ENCODE measurements at regions of chr1 and their contacts with region 1.

Region 1: DNA sequence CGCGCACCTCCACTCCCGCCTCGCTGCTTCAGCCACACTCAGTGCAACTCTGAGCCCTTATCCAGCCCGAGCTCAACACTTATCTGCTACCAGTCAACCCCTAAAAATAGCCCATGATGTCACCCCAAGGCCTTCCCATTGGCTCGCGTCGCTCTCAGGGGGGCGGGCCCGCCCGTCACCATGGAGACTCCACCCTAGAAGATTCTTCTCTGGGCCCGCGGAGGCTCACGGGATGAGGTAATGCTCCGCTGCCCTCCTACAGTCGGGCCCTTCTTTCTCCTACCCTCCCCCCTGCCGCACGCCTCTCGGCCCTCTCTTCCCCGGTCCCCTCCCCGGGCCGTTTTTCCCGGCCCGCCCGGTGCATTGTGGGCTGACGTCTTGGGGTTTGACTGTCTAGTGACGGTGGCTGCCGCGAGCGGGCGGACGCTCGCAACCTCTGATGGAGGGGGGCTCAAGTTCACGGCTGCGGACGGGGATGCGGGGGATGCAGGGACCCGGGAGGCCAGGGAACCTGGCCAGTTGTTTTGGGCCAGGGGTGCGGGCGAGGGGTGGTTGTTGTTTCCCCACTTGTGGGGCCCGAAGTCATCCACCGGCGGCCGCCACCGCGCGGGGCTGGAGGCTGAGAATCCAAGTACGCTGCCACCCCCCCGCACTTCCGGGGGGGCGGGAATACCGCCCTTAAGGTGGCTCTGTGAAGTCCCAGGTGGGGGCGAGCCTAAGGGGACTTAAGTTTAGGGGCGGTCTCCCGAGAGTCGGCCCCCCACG is at the start of gene JUN:
- DNase-seq: peak; percentile 99
- H3K4me3 ChIP-seq: peak within 1 kb of the TSS; percentile 74 to 86
- H3K27ac ChIP-seq: peak within 1 kb of the TSS; percentile 99
- H3K4me1 ChIP-seq: peaks cover 14% of the 10 kb centered on the region
- H3K27me3 ChIP-seq: no peaks in the 10 kb centered on the region
- CTCF ChIP-seq: peak in 2 of 3 experiments; percentile 34 to 60
- POLR2A ChIP-seq: peak; percentile 100
- total RNA-seq, gene JUN: 60.6 to 67.8 TPM

Region 2: DNA sequence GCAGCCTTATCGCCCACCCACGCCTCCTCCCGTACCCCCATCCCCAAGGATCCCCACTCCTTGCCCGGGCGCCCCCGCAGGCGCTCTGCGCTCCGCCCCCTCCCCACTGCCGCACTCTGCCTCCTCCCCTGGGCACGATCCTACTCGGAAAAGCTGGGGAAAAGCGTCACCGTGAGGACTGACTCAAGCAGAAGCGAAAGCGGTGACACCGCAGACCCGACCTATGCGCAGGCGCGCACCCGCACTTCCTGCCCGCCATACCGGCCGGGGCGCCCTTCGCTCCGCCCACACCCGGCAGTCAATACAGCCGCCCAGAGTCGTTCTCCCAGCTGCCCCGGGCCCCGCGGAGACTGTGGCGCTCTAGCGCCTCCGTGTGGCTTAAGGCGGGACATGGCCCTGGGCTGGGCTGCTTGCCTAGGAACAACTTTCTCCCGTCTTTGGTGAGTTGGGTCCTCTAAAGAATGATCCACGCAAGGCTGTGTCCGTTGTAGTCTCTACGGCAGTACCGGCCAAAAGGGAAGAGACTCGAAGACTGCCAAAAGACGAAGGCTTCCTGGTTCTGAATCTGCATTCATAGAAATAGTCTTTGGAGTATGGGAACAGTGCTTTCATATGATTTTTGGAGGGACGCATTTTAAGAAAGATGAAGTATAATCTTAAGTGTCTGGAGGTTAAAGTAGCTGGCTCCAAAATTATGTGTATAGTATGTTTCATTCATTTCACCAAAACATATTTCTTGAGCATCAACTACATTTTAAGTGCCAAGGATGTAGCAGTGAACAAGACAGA is 237.5 kb before region 1 on chr1 and contains the start of gene OMA1:
- intact Hi-C with region 1: no loop called
- DNase-seq: peak; percentile 97
- H3K4me3 ChIP-seq: peak within 1 kb of the TSS; percentile 77 to 88
- H3K27ac ChIP-seq: peak within 1 kb of the TSS; percentile 99
- H3K4me1 ChIP-seq: peaks cover 15% of the 10 kb centered on the region
- H3K27me3 ChIP-seq: no peaks in the 10 kb centered on the region
- CTCF ChIP-seq: peak; percentile 90 to 99 (median 97)
- POLR2A ChIP-seq: peak; percentile 41
- total RNA-seq, gene OMA1: 22.1 to 24.7 TPM

Region 3: DNA sequence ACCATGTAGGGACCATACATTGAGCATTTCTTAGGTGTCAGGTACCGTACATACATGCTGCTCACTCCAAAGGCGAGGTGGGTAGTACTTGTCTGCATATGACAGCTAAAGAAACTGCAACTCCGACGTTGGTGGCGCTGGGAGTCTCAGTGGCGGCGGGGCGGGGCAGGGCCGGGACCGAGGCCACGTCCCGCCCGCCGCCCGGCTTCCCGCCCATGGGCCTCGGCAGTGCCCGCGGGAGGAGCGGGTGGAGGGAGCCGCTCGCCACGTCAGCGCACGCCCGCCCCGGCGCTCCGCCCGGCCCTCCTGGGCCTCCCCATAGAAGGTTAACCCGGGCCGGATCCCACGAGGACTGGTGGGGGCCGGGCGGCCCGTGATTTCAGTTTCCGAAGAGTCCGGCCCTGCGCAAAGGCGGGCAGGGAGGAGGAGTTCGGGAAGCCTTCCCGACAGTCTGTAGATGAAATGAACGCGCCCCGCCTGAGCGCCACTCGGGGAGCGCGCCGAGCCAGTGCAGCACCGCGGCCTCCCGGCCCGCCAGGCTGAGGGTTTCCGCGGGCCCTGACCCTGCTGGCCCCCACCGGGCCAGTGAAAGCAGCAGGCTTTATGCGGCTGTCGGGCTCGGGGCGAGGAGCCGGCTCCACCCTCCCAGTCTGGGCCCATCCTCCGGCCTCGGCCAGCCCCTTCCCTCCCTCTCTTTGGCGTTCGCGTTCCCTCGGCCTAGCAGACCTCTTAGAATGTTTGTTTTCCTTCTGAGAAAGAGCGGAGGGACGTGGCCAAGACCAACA is 119.5 kb after region 1 on chr1:
- intact Hi-C with region 1: loop called (anchors 10 kb)
- DNase-seq: peak; percentile 93
- H3K4me3 ChIP-seq: peak overlapping the region; percentile 54 to 67
- H3K27ac ChIP-seq: peak overlapping the region; percentile 87 to 96
- H3K4me1 ChIP-seq: peaks cover 18% of the 10 kb centered on the region
- H3K27me3 ChIP-seq: no peaks in the 10 kb centered on the region
- CTCF ChIP-seq: no peak
- POLR2A ChIP-seq: peak; percentile 41

Region 4: DNA sequence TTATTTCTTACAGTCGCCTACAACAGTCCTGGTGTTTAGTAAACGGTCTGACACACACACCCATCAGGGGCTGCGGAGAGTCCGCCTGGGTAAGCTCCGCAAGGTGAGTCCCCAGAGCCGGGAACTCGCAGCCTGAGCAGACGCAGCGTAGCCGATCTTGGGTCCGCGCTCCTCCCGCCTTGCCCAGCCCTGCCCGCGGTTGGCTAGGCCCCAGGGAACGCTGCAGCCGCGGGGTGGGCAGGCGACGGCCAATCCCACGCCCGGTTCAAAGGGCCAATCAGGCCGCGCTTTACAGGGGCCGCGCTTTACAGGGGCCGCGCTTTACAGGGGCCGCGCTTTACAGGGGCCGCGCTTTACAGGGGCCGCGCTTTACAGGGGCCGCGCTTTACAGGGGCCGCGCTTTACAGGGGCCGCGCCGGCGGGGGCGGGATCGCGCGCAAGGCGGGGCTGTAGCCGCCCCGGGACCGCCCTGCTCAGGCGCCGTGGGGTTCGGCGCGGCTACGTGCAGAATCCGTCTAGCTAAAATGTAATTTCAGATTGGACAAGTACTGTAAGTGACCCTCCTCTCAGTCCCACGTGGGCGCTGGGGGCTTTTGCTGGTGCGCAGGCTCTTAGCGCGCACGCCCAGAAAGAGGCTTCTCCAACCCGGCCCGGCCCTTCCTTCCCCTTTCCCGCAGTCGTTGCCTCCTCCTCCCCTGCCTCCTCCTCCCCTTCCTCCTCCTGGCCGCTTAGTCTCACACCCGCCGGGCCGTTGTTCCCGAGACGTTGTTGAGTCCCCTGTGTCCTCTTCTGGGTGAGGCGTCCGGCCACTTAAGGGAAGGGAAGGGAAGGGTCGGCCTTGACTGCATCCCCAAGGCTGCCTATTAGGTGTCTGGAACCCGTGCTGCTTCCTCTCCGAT is 512.4 kb after region 1 on chr1 and contains the start of gene FGGY:
- intact Hi-C with region 1: loop called (anchors 10 kb)
- DNase-seq: peak; percentile 97
- H3K4me3 ChIP-seq: peak within 1 kb of the TSS; percentile 59 to 65
- H3K27ac ChIP-seq: peak within 1 kb of the TSS; percentile 92 to 95
- H3K4me1 ChIP-seq: peaks cover 19% of the 10 kb centered on the region
- H3K27me3 ChIP-seq: no peaks in the 10 kb centered on the region
- CTCF ChIP-seq: no peak
- POLR2A ChIP-seq: peak; percentile 22
- total RNA-seq, gene FGGY: 32.3 to 32.8 TPM

Region 5: DNA sequence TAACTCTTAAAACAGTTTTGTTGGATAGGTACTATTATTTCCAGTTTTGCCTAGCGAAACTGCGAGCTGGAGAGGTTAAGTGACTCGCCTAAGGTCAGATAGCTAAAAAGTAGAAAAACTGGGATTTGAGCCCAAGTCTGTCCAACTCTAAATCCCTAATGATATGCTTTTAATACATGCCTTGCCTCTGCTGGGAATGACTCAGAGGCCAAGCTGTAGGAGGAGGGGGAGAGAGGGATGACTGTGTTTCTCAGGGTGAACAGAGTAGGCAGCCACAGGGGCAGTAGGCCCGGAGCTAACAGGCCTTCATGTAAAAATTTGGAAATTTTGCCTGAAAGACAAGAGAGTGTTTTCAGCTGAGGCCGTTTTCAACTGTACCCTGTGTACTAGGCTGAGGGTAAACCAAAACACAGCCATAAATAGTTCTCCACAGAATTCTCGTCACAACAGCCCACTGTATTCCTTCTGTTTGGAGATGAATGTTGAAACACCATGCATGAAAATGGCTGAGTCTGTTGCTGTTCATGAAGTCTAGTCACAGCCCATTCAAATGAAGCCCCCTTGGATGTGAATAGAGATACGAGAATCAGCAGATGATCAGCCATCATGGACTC is 923.1 kb after region 1 on chr1:
- intact Hi-C with region 1: loop called (anchors 10 kb)
- DNase-seq: peak; percentile 40
- H3K4me3 ChIP-seq: no peak overlapping the region
- H3K27ac ChIP-seq: peak overlapping the region; percentile 4 to 25
- H3K4me1 ChIP-seq: peaks cover 3% of the 10 kb centered on the region
- H3K27me3 ChIP-seq: no peaks in the 10 kb centered on the region
- CTCF ChIP-seq: no peak
- POLR2A ChIP-seq: no peak